ENCODE measurements at regions of chr19 and their contacts with region 1.

Region 1: DNA sequence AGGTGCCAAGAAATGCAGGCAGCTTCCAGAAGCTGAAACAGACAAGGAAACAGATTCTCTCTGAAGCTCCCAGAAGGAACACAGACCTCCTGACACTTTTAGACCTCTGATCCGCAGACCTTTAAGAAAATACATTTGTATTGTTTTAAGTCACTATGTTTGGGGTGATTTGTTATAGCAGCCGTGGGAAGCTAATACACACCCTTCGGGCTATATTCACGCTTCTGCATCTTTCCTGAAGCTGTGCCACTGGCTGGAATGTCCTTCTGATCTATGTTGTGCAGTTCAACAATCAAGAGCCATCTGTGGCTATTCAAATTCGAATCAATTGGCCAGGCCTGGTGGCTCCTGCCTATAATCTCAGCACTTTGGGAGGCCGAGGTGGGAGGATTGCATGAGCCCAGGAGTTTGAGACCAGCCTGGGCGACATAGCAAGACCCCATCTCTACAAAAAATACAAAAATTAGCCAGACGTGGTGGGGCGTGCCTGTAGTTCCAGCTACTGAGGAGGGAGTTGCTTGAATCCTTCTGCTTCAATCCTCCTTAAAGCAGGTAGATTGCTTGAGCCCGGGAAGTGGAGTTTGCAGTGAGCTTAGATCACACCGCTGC is 5.8 kb upstream of the DHX34 start:
- H3K4me3 ChIP-seq: no peak overlapping the region
- H3K27ac ChIP-seq: no peak overlapping the region
- H3K4me1 ChIP-seq: no peaks in the 10 kb centered on the region
- CTCF ChIP-seq: no peak

Region 2: DNA sequence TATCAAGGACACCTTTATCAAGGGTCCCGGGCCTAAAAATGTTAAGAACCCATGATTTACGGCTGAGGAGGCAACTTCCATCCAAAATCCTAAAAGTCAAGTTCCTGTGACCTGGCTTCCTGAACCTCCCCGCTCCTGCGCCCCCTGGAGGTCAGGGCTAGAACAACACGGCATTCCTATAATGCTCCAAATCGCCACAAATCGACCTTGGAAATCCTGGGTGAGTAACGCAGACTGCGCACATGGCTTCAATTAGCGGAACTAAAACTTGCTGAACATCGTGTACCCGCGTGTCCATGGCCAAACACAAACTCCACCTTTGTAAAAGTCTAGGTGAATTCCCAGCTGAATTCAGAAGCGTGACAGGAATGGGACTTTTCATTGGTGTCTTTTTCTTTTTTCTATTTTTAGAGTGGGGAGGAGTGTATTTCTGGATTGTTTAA is 38.0 kb before region 1 on chr19:
- CTCF ChIA-PET with region 1: interaction called, 12 read pairs
- POLR2A ChIA-PET with region 1: no interaction called
- H3K4me3 ChIP-seq: no peak overlapping the region; the same call in 1 of the 2 replicates
- H3K27ac ChIP-seq: no peak overlapping the region
- H3K4me1 ChIP-seq: no peaks in the 10 kb centered on the region
- CTCF ChIP-seq: peak; percentile 75

Measured in HEK293 (cell line).